Common myeloid progenitor, CD34-positive (primary cell): ENCODE measurements at regions of chr7 and their contacts with region 1.

Region 1: GRCh38 chr7:142535123-142535779 is 214.0 kb upstream of the PRSS1 start:
- DNase-seq: peak; percentile 88 to 94 (median 92)
- H3K4me3 ChIP-seq: peak overlapping the region in 3 of 7 experiments; percentile 14 to 41 (median 38)
- H3K27ac ChIP-seq: peak overlapping the region in 1 of 2 experiments; percentile 2
- H3K4me1 ChIP-seq: peaks cover 0 to 12% (median 12%) of the 10 kb centered on the region in 4 experiments
- H3K27me3 ChIP-seq: no peaks in the 10 kb centered on the region

Region 2: DNA sequence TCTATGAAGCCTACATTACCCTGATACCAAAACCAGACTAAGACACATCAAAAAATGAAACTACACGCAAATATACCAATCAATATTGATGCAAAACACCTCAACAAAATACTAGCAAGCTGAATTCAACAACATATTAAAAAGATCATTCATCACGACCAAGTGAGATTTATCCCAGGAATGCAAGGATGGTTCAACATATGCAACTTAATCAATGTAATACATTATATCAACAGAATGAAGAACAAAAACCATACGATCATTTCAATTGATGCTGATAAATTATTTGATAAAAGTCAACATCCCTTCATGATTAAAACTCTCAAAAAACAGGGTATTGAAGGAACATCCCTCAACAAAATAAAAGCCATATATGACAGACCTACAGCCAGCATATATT is 594.2 kb before region 1 on chr7:
- CTCF ChIA-PET with region 1: no interaction called
- POLR2A ChIA-PET with region 1: no interaction called
- DNase-seq: no peak
- H3K4me3 ChIP-seq: no peak overlapping the region
- H3K27ac ChIP-seq: no peak overlapping the region
- H3K4me1 ChIP-seq: peaks cover 4 to 20% (median 11%) of the 10 kb centered on the region in 4 experiments
- H3K27me3 ChIP-seq: no peaks in the 10 kb centered on the region

Region 3: GRCh38 chr7:142523821-142524460 is 11.3 kb before region 1 on chr7:
- CTCF ChIA-PET with region 1: interaction called, 60 read pairs
- POLR2A ChIA-PET with region 1: no interaction called
- DNase-seq: peak in 2 of 3 donors; percentile 28 to 32
- H3K4me3 ChIP-seq: no peak overlapping the region
- H3K27ac ChIP-seq: no peak overlapping the region
- H3K4me1 ChIP-seq: peaks cover 0 to 9% (median 5%) of the 10 kb centered on the region in 4 experiments
- H3K27me3 ChIP-seq: no peaks in the 10 kb centered on the region

Region 4: GRCh38 chr7:142568435-142569097 is 33.3 kb after region 1 on chr7:
- CTCF ChIA-PET with region 1: interaction called, 14 read pairs
- POLR2A ChIA-PET with region 1: no interaction called
- DNase-seq: peak in 2 of 3 donors; percentile 58 to 78
- H3K4me3 ChIP-seq: no peak overlapping the region
- H3K27ac ChIP-seq: no peak overlapping the region
- H3K4me1 ChIP-seq: peaks cover 5 to 63% (median 50%) of the 10 kb centered on the region in 4 experiments
- H3K27me3 ChIP-seq: no peaks in the 10 kb centered on the region

Region 5: GRCh38 chr7:142626420-142627035 is 91.3 kb after region 1 on chr7:
- CTCF ChIA-PET with region 1: interaction called, 11 read pairs
- POLR2A ChIA-PET with region 1: no interaction called
- DNase-seq: peak; percentile 69 to 85 (median 80)
- H3K4me3 ChIP-seq: peak overlapping the region in 2 of 7 experiments; percentile 15 to 51
- H3K27ac ChIP-seq: no peak overlapping the region
- H3K4me1 ChIP-seq: peaks cover 3 to 25% (median 13%) of the 10 kb centered on the region in 4 experiments
- H3K27me3 ChIP-seq: no peaks in the 10 kb centered on the region

Region 6: GRCh38 chr7:142782922-142783900 is 248.0 kb after region 1 on chr7:
- CTCF ChIA-PET with region 1: interaction called, 18 read pairs
- POLR2A ChIA-PET with region 1: no interaction called
- DNase-seq: peak; percentile 95 to 98 (median 96)
- H3K4me3 ChIP-seq: peak overlapping the region in 6 of 7 experiments; percentile 3 to 69 (median 56)
- H3K27ac ChIP-seq: peak overlapping the region in 1 of 2 experiments; percentile 49
- H3K4me1 ChIP-seq: peaks cover 0 to 22% (median 13%) of the 10 kb centered on the region in 4 experiments
- H3K27me3 ChIP-seq: no peaks in the 10 kb centered on the region